Right ventricle myocardium superior (tissue), 1 donor: ENCODE measurements at regions of chr19 and their contacts with region 1.

Region 1: DNA sequence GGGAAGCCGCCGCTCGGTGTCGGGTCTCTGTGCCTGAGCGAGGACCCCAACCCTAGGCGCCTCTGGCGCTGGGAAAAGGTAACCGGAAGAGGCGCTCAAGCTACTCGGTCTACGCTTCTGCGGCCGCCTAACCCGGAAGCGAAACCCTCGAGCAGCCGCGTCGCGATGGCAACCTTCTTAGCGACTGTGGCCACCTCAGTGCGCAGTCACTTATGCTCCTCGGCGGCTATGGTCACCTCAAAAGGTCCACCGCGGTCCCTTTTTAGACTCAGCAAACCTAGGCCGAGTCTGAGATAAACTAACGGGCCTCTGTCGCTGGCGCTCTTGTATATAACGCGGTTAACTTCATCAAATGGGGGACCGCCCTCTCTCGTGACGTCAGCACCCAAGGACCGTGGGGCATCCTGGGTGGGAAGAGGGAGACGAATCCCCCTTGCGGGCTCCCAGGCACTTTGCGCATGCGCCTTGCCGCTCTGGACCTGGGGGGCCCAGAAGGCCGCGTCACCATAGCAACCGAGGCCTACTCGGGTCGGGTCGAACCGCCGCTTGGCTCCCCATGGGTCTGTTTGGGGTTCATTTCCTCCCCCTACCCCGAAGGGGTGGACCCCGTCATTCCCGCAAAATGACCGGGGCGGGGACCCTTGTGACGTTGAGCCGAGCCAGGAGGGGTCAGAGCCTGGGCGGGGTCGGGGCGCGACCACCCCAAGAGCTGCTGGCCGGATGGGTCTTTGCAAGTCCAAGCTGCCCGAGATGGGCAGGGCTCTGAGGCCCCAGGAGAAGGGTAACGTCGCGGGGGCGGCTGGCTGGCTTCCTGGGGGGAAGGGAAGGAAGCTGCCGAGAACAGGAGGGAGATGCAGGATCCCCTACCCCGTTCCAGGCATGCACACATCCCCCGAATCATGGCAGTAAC is at the start of gene GTF2F1:
- DNase-seq: peak; percentile 97
- ATAC-seq: peak; percentile 97
- total RNA-seq, gene GTF2F1: 30.5 TPM

Region 2: DNA sequence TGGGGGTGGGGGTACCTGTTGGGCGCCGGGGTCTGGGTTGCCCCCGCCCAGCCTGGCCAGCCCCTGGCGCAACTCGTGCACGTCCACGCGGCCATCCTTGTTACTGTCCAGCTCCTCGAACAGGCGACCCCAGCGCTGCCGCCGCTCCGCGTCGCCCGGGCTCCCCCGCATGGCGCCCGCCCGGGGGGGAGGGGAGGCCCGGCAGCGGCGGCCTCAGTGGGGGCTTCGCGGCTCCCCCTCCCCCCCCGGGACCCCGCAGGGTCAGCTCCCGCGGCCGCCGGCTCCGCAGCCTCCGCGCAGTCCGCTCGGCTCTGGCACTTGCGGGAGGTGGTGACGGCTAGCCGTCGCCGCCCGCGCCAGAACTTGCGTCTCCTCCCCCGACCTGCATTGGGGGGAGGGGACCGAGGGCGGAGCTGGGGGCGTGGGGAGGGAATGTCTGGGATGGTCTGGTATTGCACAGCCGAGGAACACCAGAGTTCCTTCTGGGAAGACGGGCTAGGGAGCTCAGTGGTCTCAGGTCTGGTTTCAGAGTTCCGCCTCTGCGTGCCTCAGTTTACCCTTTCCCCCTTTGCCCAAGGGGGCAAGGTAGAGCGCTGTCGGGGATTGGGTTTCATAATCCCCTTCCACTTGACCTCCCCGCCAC is 66.2 kb after region 1 on chr19 and contains the start of gene SLC25A23:
- intact Hi-C with region 1: loop called (anchors 5 kb)
- DNase-seq: peak; percentile 77
- ATAC-seq: peak; percentile 85
- total RNA-seq, gene SLC25A23: 87.0 TPM